ENCODE measurements at regions of chr7 and their contacts with region 1.

Region 1: GRCh38 chr7:142859829-142860228 is 5.0 kb downstream of the EPHB6 start:
- DNase-seq: no peak
- ATAC-seq: no peak
- H3K4me3 ChIP-seq: no peak overlapping the region
- H3K27ac ChIP-seq: no peak overlapping the region
- H3K4me1 ChIP-seq: no peaks in the 10 kb centered on the region
- H3K27me3 ChIP-seq: peaks cover 0 to 9% of the 10 kb centered on the region in 2 experiments; a peak in 3 of 4 replicates
- CTCF ChIP-seq: no peak
- EP300 ChIP-seq: no peak
- POLR2A ChIP-seq: no peak
- RAD21 ChIP-seq: no peak

Region 2: GRCh38 chr7:142615508-142615907 is 244.3 kb before region 1 on chr7:
- CTCF ChIA-PET with region 1: no interaction called
- POLR2A ChIA-PET with region 1: no interaction called
- RAD21 ChIA-PET with region 1: no interaction called
- SMC1A ChIA-PET with region 1: no interaction called
- in situ Hi-C with region 1: no loop called
- intact Hi-C with region 1: no loop called
- DNase-seq: no peak
- ATAC-seq: no peak
- H3K4me3 ChIP-seq: no peak overlapping the region
- H3K27ac ChIP-seq: no peak overlapping the region
- H3K4me1 ChIP-seq: no peaks in the 10 kb centered on the region
- H3K27me3 ChIP-seq: peaks cover 0 to 3% of the 10 kb centered on the region in 2 experiments; a peak in 1 of 4 replicates
- CTCF ChIP-seq: no peak
- EP300 ChIP-seq: no peak
- POLR2A ChIP-seq: no peak
- RAD21 ChIP-seq: no peak

Region 3: GRCh38 chr7:142626420-142627035 is 233.3 kb before region 1 on chr7:
- CTCF ChIA-PET with region 1: no interaction called
- POLR2A ChIA-PET with region 1: no interaction called
- RAD21 ChIA-PET with region 1: no interaction called
- SMC1A ChIA-PET with region 1: no interaction called
- in situ Hi-C with region 1: no loop called
- intact Hi-C with region 1: no loop called
- DNase-seq: no peak
- ATAC-seq: peak; percentile 96
- H3K4me3 ChIP-seq: no peak overlapping the region
- H3K27ac ChIP-seq: no peak overlapping the region
- H3K4me1 ChIP-seq: no peaks in the 10 kb centered on the region
- H3K27me3 ChIP-seq: peaks cover 0 to 3% of the 10 kb centered on the region in 2 experiments; a peak in 1 of 4 replicates
- CTCF ChIP-seq: peak; percentile 56 to 79 (median 69)
- EP300 ChIP-seq: no peak
- POLR2A ChIP-seq: no peak
- RAD21 ChIP-seq: peak; percentile 37

Region 4: DNA sequence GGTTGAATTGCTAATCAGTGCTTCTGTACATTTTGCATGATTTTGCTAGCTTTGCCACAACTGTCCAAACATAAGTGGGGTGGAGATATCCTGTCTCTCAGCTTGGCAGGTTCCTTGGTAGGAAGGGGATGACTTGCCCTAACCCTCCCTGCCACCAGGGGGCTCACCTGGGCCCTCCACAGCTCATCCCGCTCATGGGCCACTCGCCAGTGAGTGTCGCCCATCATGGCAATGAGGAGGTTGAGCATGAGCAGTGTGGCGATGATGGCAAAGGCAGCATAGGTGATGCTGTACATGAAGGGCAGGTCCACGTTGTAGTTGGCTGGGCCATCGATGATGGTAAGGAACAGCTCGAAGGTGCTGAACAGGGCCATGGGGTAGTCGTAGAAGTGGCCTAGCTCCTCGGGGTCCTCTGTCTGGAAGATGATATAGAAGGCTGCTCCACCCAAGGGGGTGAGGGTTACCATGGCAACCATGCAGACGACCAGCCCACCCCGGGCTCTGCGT is 13.5 kb after region 1 on chr7:
- CTCF ChIA-PET with region 1: interaction called, 20 read pairs
- POLR2A ChIA-PET with region 1: no interaction called
- RAD21 ChIA-PET with region 1: interaction called, 5 read pairs
- SMC1A ChIA-PET with region 1: interaction called, 4 read pairs
- in situ Hi-C with region 1: no loop called
- intact Hi-C with region 1: no loop called
- DNase-seq: no peak
- ATAC-seq: peak; percentile 93
- H3K4me3 ChIP-seq: no peak overlapping the region
- H3K27ac ChIP-seq: no peak overlapping the region
- H3K4me1 ChIP-seq: no peaks in the 10 kb centered on the region
- H3K27me3 ChIP-seq: no peaks in the 10 kb centered on the region
- CTCF ChIP-seq: peak; percentile 52 to 81 (median 76)
- EP300 ChIP-seq: no peak
- POLR2A ChIP-seq: no peak
- RAD21 ChIP-seq: peak; percentile 28; the same call in 1 of the 2 replicates

Measured in GM12878 (cell line).